PC-9 (cell line): ENCODE measurements at regions of chr10 and their contacts with region 1.

Region 1: DNA sequence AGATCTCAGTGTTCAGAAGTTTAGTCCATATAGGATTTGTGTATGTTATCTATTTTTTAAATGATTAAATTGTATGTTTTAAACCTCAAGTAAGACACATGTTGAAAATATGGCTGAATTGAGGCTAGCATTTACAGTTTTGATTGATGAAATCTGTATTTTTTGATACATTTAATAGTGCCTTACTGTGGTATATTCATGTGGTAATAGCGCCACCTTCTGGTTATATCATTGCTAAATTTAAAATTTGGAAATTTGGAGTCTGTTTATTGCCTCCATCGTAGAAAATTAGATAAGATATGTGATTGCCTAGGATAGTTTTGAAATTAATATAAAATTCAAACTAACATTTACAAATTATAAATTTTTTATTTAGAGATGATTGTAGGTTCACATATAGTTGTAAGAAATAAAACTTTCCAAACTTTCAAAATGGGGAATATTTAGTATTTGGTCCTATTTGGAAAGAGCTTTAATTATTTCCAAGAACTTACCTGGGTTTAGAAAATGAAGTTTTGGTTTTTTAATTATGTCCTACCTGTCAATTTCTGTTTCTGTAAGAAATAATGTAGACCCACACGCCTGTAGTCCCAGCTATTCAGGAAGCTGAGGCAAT is 19.1 kb upstream of the ARMS2 start:
- DNase-seq: peak in 1 of 2 experiments; percentile 38
- H3K4me3 ChIP-seq: no peak overlapping the region
- H3K27ac ChIP-seq: no peak overlapping the region
- H3K4me1 ChIP-seq: no peaks in the 10 kb centered on the region
- H3K27me3 ChIP-seq: no peaks in the 10 kb centered on the region
- CTCF ChIP-seq: peak; percentile 83

Region 2: DNA sequence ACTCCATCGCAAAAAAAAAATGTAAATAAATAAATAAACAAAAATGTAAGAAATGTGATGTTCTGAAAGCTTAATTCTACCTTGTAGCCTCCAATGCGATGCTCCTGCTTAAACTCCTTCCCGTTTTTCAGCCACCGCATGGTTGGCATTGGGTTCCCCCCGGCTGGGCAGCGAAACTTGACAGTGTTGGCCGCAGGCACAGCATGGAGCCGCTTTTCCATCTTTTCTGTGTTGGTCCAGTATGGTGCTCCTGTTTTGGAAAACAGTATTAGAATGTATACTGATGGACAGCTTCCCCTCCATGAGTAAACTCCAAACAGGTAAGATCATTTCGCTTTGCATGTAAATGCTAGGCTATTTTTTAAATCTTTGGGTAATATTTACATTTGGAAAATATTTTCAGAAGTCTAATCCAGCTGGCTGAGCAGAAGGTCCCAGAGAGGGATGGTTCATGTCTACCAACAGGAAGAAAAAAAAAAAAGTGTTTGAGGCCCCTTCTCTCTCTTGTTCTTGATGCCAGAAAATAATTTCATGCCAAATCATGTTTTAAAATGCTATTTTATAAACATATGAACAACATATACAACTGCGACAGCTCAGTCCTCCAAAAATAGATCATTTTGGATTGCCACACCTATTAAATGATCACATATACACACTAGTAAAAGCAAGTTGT is 884.0 kb before region 1 on chr10:
- CTCF ChIA-PET with region 1: interaction called, 10 read pairs
- POLR2A ChIA-PET with region 1: no interaction called
- intact Hi-C with region 1: no loop called
- DNase-seq: no peak
- H3K4me3 ChIP-seq: no peak overlapping the region
- H3K27ac ChIP-seq: no peak overlapping the region
- H3K4me1 ChIP-seq: no peaks in the 10 kb centered on the region
- H3K27me3 ChIP-seq: peaks cover 34% of the 10 kb centered on the region
- CTCF ChIP-seq: no peak

Region 3: GRCh38 chr10:122142641-122143237 is 292.6 kb before region 1 on chr10:
- CTCF ChIA-PET with region 1: no interaction called
- POLR2A ChIA-PET with region 1: no interaction called
- intact Hi-C with region 1: loop called (anchors 10 kb)
- DNase-seq: no peak
- H3K4me3 ChIP-seq: no peak overlapping the region
- H3K27ac ChIP-seq: no peak overlapping the region
- H3K4me1 ChIP-seq: peaks cover 25% of the 10 kb centered on the region
- H3K27me3 ChIP-seq: no peaks in the 10 kb centered on the region
- CTCF ChIP-seq: peak; percentile 80

Region 4: DNA sequence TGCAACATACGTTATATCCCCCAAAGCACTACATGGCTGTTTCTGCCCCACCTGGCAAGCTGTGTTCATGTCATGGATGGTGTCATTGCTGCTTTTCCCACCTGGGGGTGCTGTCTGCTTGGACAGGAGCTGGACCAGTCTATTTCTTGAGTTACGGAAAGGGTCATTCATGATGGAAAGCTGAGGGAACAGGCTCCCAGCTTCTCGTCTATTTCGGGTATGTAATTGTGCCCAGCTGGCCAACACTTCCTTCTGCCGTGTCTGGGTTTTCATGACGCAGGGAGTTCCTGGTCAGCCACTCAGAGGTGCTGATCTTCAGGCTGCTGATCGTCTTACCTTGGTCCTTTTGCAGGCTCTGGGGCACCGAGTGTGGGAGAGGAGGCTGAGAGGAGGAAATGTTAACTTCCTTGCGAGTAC is 155.6 kb before region 1 on chr10:
- CTCF ChIA-PET with region 1: interaction called, 3 read pairs
- POLR2A ChIA-PET with region 1: no interaction called
- intact Hi-C with region 1: loop called (anchors 1 kb)
- DNase-seq: peak in 1 of 2 experiments; percentile 64
- H3K4me3 ChIP-seq: no peak overlapping the region
- H3K27ac ChIP-seq: no peak overlapping the region
- H3K4me1 ChIP-seq: no peaks in the 10 kb centered on the region
- H3K27me3 ChIP-seq: no peaks in the 10 kb centered on the region
- CTCF ChIP-seq: peak; percentile 71

Region 5: DNA sequence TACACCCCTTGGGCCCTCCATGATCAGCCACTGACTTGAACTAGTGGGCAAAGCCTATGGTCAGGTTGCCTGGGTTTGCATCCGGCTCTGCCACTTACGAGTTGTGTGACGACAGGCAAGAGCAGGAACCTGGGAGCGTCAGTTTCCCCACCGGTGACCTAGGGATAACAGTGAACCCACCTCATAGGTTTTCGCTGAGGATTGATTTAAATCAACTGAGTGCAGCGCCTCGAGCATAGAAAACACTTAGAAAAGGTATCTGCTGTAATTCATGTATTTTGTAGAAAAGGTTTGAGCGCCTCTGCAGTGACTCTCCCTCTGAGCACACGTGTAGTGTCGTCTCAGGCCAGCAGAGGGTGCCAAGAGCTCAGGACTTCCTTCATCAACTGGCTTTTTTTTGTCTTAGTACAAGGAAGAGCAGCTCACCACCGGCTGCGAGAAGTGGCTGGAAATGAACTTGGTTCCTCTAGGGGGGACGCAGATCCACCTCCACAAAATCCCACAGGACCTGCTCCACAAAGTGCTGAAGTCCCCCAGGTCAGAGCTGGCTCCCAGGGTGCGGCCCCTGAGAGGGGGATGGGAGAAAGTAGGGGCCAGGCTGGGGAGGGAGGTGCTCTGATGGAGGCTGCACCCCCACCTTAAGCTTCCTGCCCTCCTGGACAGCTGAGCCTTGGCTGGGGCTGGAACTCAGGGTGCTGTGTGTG is 136.6 kb before region 1 on chr10:
- CTCF ChIA-PET with region 1: interaction called, 7 read pairs
- POLR2A ChIA-PET with region 1: no interaction called
- intact Hi-C with region 1: loop called (anchors 1 kb)
- DNase-seq: peak; percentile 56 to 65
- H3K4me3 ChIP-seq: no peak overlapping the region; the same call in 1 of the 2 replicates
- H3K27ac ChIP-seq: no peak overlapping the region
- H3K4me1 ChIP-seq: peaks cover 19% of the 10 kb centered on the region
- H3K27me3 ChIP-seq: no peaks in the 10 kb centered on the region
- CTCF ChIP-seq: peak; percentile 84